ENCODE measurements at regions of chr19 and their contacts with region 1.

Region 1: GRCh38 chr19:48255376-48256303 is at the start of gene CARD8:
- DNase-seq: peak; percentile 92
- H3K4me3 ChIP-seq: peak within 1 kb of the TSS; percentile 71
- H3K27ac ChIP-seq: peak within 1 kb of the TSS; percentile 94
- H3K4me1 ChIP-seq: peaks cover 65% of the 10 kb centered on the region
- CTCF ChIP-seq: no peak
- total RNA-seq, gene CARD8: 51.0 and 52.5 TPM in 2 replicates

Region 2: GRCh38 chr19:48110350-48110966 is 145.2 kb before region 1 on chr19 and contains the start of gene PLA2G4C:
- CTCF ChIA-PET with region 1: no interaction called
- POLR2A ChIA-PET with region 1: interaction called, 3 read pairs
- intact Hi-C with region 1: loop called (anchors 1 kb)
- DNase-seq: peak; percentile 88
- H3K4me3 ChIP-seq: peak within 1 kb of the TSS; percentile 67
- H3K27ac ChIP-seq: peak within 1 kb of the TSS; percentile 46
- H3K4me1 ChIP-seq: peaks cover 20% of the 10 kb centered on the region
- CTCF ChIP-seq: no peak
- total RNA-seq, gene PLA2G4C: 0.98 and 2.0 TPM in 2 replicates

Region 3: GRCh38 chr19:48186541-48186991 is 69.1 kb before region 1 on chr19:
- CTCF ChIA-PET with region 1: no interaction called
- POLR2A ChIA-PET with region 1: interaction called, 4 read pairs
- intact Hi-C with region 1: loop called (anchors 5 kb)
- DNase-seq: peak; percentile 93
- H3K4me3 ChIP-seq: peak overlapping the region; percentile 58
- H3K27ac ChIP-seq: peak overlapping the region; percentile 97
- H3K4me1 ChIP-seq: peaks cover 61% of the 10 kb centered on the region
- CTCF ChIP-seq: no peak

Region 4: DNA sequence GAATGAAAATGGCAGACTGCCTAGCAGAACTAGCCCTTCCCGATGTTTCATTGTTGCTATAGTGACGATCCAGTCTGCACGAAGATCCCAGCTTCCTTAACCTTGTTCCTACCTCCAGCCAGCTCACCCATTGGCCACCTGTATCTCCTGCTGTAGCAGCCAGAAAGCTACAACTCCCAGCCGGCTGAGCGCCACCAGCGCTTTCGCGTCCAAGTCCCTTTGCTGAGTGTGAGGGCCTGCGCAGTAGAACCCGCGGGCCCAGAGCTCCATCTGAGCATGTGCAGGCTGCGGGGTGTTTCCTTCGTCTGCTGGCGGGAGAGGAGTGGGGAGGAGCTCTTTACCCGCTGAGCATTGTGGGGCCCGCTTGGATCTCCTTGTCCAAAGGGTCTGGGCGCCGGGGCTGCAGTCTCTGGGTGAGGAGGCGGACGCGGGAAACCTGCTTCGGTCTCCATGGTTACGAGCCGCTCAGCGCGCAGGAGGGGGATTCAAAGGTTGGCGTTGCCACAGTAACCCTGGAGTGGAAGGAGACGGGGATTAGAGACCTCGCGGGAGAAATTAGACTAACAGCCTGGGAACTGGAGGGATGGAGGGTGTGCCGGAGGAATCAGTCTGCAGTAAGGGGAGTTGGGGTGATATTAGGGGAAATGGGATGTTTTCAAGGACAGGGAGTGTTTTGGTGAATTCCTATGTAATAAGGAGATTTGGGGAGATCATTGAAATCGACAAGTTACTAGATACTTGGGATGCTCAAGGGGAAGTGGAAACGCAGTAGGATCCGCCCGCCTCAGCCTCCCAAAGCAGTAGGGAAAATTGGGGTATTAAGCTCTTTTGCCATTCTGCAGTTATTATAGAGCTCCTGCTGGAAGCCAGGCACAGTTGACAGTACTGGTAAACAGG is 51.7 kb before region 1 on chr19:
- CTCF ChIA-PET with region 1: interaction called, 3 read pairs
- POLR2A ChIA-PET with region 1: interaction called, 22 read pairs
- intact Hi-C with region 1: loop called (anchors 5 kb)
- DNase-seq: peak; percentile 95
- H3K4me3 ChIP-seq: peak overlapping the region; percentile 81
- H3K27ac ChIP-seq: peak overlapping the region; percentile 60
- H3K4me1 ChIP-seq: peaks cover 23% of the 10 kb centered on the region
- CTCF ChIP-seq: no peak

Region 5: GRCh38 chr19:48333467-48334384 is 78.1 kb after region 1 on chr19:
- CTCF ChIA-PET with region 1: no interaction called
- POLR2A ChIA-PET with region 1: interaction called, 3 read pairs
- intact Hi-C with region 1: loop called (anchors 5 kb)
- DNase-seq: peak; percentile 96
- H3K4me3 ChIP-seq: peak overlapping the region; percentile 72
- H3K27ac ChIP-seq: peak overlapping the region; percentile 91
- H3K4me1 ChIP-seq: peaks cover 50% of the 10 kb centered on the region
- CTCF ChIP-seq: peak; percentile 86

Measured in OCI-LY7 (cell line).